ENCODE measurements at regions of chr4 and their contacts with region 1.

Region 1: DNA sequence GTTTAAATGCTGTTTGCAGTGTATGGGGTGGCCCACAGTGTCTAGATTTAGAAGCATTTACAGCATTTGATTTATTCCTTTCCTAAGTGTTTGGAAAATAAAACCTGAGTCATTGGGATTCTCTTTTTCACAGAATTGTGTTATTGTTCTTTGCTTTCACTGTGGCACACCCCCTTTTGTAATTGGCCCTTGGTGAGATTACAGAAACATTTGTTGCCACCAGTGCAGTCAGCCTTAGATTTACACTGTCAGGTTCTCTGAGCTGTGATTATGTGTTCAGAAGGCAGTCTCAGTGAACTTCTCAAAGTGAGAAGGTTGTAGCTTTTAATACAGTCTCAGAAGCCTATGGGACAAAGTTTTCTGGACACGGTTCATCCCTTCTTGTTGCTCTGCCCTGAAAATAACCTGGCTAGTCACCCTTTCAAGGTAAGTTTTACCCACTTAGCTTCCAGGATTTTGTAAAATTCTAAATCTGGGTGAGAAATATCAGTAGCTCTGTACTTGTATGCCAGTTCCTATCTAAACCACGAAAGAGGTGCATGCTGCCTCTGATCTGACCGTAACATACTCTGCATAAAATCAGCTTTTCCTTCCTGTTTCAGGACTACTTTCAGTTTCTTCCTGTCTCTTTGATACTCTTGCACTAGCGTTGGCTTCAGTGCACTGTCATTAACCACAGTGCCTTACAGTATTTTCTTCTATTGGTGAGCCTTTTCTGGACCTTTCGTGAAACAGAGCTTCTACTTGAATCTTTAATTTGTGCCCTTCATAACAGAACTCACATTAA is 12.6 kb downstream of the RUFY3 start:
- DNase-seq: peak in 4 of 5 donors; percentile 10 to 68 (median 62)
- H3K4me3 ChIP-seq: peak overlapping the region; percentile 66
- H3K4me3 Mint-ChIP-seq: peak overlapping the region; percentile 60 to 83 (median 75)
- H3K27ac ChIP-seq: peak overlapping the region; percentile 60
- H3K27ac Mint-ChIP-seq: peak overlapping the region; percentile 77 to 95 (median 88)
- H3K4me1 ChIP-seq: peaks cover 50% of the 10 kb centered on the region
- H3K4me1 Mint-ChIP-seq: peaks cover 42 to 53% (median 48%) of the 10 kb centered on the region in 3 donors
- H3K27me3 ChIP-seq: no peaks in the 10 kb centered on the region
- H3K27me3 Mint-ChIP-seq: no peaks in the 10 kb centered on the region

Region 2: GRCh38 chr4:69999420-69999819 is 734.9 kb before region 1 on chr4:
- CTCF ChIA-PET with region 1: no interaction called
- POLR2A ChIA-PET with region 1: no interaction called
- DNase-seq: no peak
- H3K4me3 ChIP-seq: no peak overlapping the region
- H3K4me3 Mint-ChIP-seq: no peak overlapping the region
- H3K27ac ChIP-seq: no peak overlapping the region
- H3K27ac Mint-ChIP-seq: no peak overlapping the region
- H3K4me1 ChIP-seq: no peaks in the 10 kb centered on the region
- H3K4me1 Mint-ChIP-seq: no peaks in the 10 kb centered on the region
- H3K27me3 ChIP-seq: no peaks in the 10 kb centered on the region
- H3K27me3 Mint-ChIP-seq: no peaks in the 10 kb centered on the region

Region 3: GRCh38 chr4:70651864-70652506 is 82.4 kb before region 1 on chr4:
- CTCF ChIA-PET with region 1: interaction called, 13 read pairs
- POLR2A ChIA-PET with region 1: no interaction called
- DNase-seq: peak in 2 of 5 donors; percentile 24 to 37
- H3K4me3 ChIP-seq: no peak overlapping the region
- H3K4me3 Mint-ChIP-seq: no peak overlapping the region
- H3K27ac ChIP-seq: no peak overlapping the region
- H3K27ac Mint-ChIP-seq: no peak overlapping the region
- H3K4me1 ChIP-seq: no peaks in the 10 kb centered on the region
- H3K4me1 Mint-ChIP-seq: peaks cover 0 to 5% (median 0%) of the 10 kb centered on the region in 3 donors
- H3K27me3 ChIP-seq: no peaks in the 10 kb centered on the region
- H3K27me3 Mint-ChIP-seq: peaks cover 0 to 9% of the 10 kb centered on the region in 2 donors

Region 4: DNA sequence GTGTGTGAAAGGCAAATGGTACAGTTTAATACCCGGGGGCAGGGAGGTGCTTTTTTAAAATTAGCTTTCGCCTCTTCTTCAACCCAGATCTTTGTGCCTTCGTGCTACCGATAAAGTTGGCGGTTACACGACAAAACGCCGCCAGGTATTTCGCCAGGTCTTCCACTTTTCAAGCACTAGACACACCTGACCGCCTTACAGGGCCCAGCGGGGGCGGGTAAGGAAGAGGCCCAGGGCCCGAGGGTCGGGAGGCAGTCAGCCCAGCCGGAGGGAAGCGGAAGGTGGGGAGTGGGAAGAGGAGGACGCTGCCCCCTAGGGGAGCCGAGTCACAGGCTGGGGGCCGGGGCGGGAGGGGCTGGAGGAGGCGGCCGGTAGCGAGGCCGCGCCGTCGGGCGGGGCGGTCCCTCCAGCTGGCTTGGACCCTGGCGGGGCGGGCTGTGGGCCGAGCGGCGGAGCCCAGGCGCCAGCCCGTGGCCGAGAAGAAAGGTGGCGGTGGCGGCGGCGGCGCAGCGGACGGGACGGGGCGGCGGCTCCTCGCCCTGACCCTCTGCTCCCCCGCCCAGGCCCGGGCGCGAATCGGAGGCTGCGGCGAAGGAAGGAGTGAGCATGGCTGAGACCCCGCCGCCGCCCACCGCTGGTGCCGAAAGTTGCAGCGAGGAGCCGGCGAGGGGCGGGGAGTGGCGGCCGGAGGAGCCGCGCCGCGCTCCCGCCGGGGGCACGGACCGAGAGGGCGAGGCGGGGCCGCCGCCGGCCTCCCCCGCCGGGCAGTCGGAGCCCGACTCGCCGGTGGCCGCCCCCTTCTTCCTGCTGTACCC is 29.8 kb before region 1 on chr4:
- CTCF ChIA-PET with region 1: interaction called, 93 read pairs
- POLR2A ChIA-PET with region 1: interaction called, 47 read pairs
- DNase-seq: peak; percentile 56 to 77 (median 62)
- H3K4me3 ChIP-seq: peak overlapping the region; percentile 40
- H3K4me3 Mint-ChIP-seq: peak overlapping the region; percentile 87 to 99 (median 93)
- H3K27ac ChIP-seq: peak overlapping the region; percentile 39
- H3K27ac Mint-ChIP-seq: peak overlapping the region; percentile 88 to 97 (median 93)
- H3K4me1 ChIP-seq: peaks cover 27% of the 10 kb centered on the region
- H3K4me1 Mint-ChIP-seq: peaks cover 19 to 38% (median 32%) of the 10 kb centered on the region in 3 donors
- H3K27me3 ChIP-seq: no peaks in the 10 kb centered on the region
- H3K27me3 Mint-ChIP-seq: peaks cover 0 to 1% of the 10 kb centered on the region in 2 donors

Region 5: GRCh38 chr4:70746179-70746839 is 11.9 kb after region 1 on chr4:
- CTCF ChIA-PET with region 1: interaction called, 15 read pairs
- POLR2A ChIA-PET with region 1: interaction called, 4 read pairs
- DNase-seq: no peak
- H3K4me3 ChIP-seq: no peak overlapping the region
- H3K4me3 Mint-ChIP-seq: no peak overlapping the region
- H3K27ac ChIP-seq: no peak overlapping the region
- H3K27ac Mint-ChIP-seq: peak overlapping the region in 1 of 8 donors; percentile 56
- H3K4me1 ChIP-seq: no peaks in the 10 kb centered on the region
- H3K4me1 Mint-ChIP-seq: peaks cover 0 to 16% (median 0%) of the 10 kb centered on the region in 3 donors
- H3K27me3 ChIP-seq: no peaks in the 10 kb centered on the region
- H3K27me3 Mint-ChIP-seq: no peaks in the 10 kb centered on the region

Region 6: GRCh38 chr4:70801265-70801809 is 67.0 kb after region 1 on chr4:
- CTCF ChIA-PET with region 1: no interaction called
- POLR2A ChIA-PET with region 1: no interaction called
- DNase-seq: peak in 1 of 5 donors; percentile 11
- H3K4me3 ChIP-seq: no peak overlapping the region
- H3K4me3 Mint-ChIP-seq: no peak overlapping the region
- H3K27ac ChIP-seq: no peak overlapping the region
- H3K27ac Mint-ChIP-seq: peak overlapping the region in 3 of 8 donors; percentile 3 to 54 (median 4)
- H3K4me1 ChIP-seq: peaks cover 7% of the 10 kb centered on the region
- H3K4me1 Mint-ChIP-seq: peaks cover 13 to 17% (median 13%) of the 10 kb centered on the region in 3 donors
- H3K27me3 ChIP-seq: no peaks in the 10 kb centered on the region
- H3K27me3 Mint-ChIP-seq: no peaks in the 10 kb centered on the region

Region 7: GRCh38 chr4:70901984-70902576 is 167.7 kb after region 1 on chr4 and contains the start of gene MOB1B:
- CTCF ChIA-PET with region 1: interaction called, 11 read pairs
- POLR2A ChIA-PET with region 1: interaction called, 3 read pairs
- DNase-seq: peak; percentile 78 to 91 (median 80)
- H3K4me3 ChIP-seq: peak within 1 kb of the TSS; percentile 97
- H3K4me3 Mint-ChIP-seq: peak within 1 kb of the TSS; percentile 96 to 99 (median 98)
- H3K27ac ChIP-seq: peak within 1 kb of the TSS; percentile 77
- H3K27ac Mint-ChIP-seq: peak within 1 kb of the TSS; percentile 8 to 96 (median 88)
- H3K4me1 ChIP-seq: peaks cover 21% of the 10 kb centered on the region
- H3K4me1 Mint-ChIP-seq: peaks cover 21 to 44% (median 27%) of the 10 kb centered on the region in 3 donors
- H3K27me3 ChIP-seq: no peaks in the 10 kb centered on the region
- H3K27me3 Mint-ChIP-seq: peaks cover 0 to 1% of the 10 kb centered on the region in 2 donors
- total RNA-seq, gene MOB1B: 18.4 to 19.8 TPM